Heart left ventricle (tissue), 16 donors: ENCODE measurements at regions of chr5 and their contacts with region 1.

Region 1: DNA sequence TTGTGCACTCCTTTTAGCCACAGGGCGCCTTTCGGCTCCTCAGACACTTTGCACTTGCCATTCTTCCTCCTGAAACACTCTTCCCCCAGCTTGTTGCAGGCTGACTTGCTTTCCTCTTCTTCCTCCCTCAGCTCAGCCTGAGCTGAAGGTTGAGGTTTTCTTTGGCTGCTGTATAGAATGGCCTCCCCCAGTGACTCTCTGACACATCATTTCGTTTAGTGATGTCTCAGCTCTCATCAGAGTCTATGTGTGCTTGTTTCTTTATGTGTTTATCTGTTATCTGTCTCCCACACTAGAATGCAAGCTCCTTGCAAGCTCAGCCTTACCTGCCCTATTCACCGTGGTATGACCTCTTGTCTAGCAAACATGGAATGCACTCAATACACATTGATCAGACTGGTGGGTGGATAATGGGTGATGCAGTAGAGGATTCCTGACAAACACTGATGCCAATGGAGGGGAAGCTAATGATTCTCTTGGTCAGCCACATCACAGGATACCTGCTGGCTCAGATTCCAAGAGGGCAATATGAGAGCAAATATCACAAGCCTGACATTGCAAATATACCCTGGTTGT is 112.9 kb upstream of the STC2 start:
- DNase-seq: no peak
- ATAC-seq: no peak
- H3K4me3 ChIP-seq: no peak overlapping the region
- H3K27ac ChIP-seq: no peak overlapping the region
- H3K4me1 ChIP-seq: no peaks in the 10 kb centered on the region
- H3K27me3 ChIP-seq: peaks cover 0 to 2% (median 0%) of the 10 kb centered on the region in 9 donors
- CTCF ChIP-seq: no peak
- POLR2A ChIP-seq: no peak

Region 2: GRCh38 chr5:173391031-173391430 is 50.1 kb before region 1 on chr5:
- intact Hi-C with region 1: loop called in 1 of 10 experiments (anchors 2 kb)
- DNase-seq: no peak
- ATAC-seq: no peak
- H3K4me3 ChIP-seq: no peak overlapping the region
- H3K27ac ChIP-seq: no peak overlapping the region
- H3K4me1 ChIP-seq: peaks cover 0 to 6% (median 0%) of the 10 kb centered on the region in 12 donors
- H3K27me3 ChIP-seq: peaks cover 0 to 5% (median 0%) of the 10 kb centered on the region in 9 donors
- CTCF ChIP-seq: no peak
- POLR2A ChIP-seq: no peak

Region 3: GRCh38 chr5:173472141-173472543 is 31.0 kb after region 1 on chr5:
- intact Hi-C with region 1: no loop called
- DNase-seq: peak in 4 of 5 donors; percentile 56 to 77 (median 66)
- ATAC-seq: peak; percentile 90 to 96 (median 92)
- H3K4me3 ChIP-seq: no peak overlapping the region
- H3K27ac ChIP-seq: peak overlapping the region; percentile 54 to 83 (median 65)
- H3K4me1 ChIP-seq: peaks cover 0 to 20% (median 13%) of the 10 kb centered on the region in 12 donors
- H3K27me3 ChIP-seq: no peaks in the 10 kb centered on the region
- CTCF ChIP-seq: no peak
- POLR2A ChIP-seq: no peak

Region 4: GRCh38 chr5:173581408-173582215 is 140.5 kb after region 1 on chr5:
- intact Hi-C with region 1: loop called in 1 of 10 experiments (anchors 10 kb)
- DNase-seq: peak in 1 of 5 donors; percentile 36
- ATAC-seq: peak in 3 of 4 donors; percentile 31 to 53 (median 36)
- H3K4me3 ChIP-seq: no peak overlapping the region
- H3K27ac ChIP-seq: no peak overlapping the region
- H3K4me1 ChIP-seq: peaks cover 0 to 19% (median 0%) of the 10 kb centered on the region in 12 donors
- H3K27me3 ChIP-seq: no peaks in the 10 kb centered on the region
- CTCF ChIP-seq: peak; percentile 44 to 75 (median 64)
- POLR2A ChIP-seq: no peak

Region 5: DNA sequence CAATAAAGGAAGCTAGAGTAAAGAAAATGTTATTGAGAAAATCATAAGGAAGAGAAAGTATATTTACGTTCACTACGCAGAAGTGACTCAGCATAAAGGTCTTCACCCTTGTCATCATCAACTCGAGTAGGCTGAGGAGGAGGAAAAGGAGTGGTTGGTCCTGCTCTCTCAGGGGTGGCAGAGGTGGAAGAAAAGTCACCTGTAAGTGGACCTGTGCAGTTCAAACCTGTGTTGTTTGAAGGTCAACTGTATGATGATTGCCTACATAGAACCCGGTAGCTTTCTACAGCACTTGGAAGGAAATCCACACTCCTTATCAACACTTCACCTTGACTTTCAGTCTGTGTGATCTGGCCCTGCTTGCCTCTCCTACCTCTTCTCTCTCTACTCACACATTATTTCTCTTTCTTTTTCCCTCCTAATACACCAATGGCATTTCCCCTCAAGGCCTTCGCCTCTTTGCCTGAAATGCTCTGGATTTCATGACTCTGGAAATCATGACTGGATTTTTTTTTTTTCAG is 337.7 kb after region 1 on chr5:
- intact Hi-C with region 1: no loop called
- DNase-seq: no peak
- ATAC-seq: no peak
- H3K4me3 ChIP-seq: no peak overlapping the region
- H3K27ac ChIP-seq: peak overlapping the region in 1 of 12 donors; percentile 57
- H3K4me1 ChIP-seq: peaks cover 0 to 59% (median 12%) of the 10 kb centered on the region in 12 donors
- H3K27me3 ChIP-seq: no peaks in the 10 kb centered on the region
- CTCF ChIP-seq: no peak
- POLR2A ChIP-seq: no peak